Left cardiac atrium (tissue), 4 donors: ENCODE measurements at regions of chr11 and their contacts with region 1.

Region 1: DNA sequence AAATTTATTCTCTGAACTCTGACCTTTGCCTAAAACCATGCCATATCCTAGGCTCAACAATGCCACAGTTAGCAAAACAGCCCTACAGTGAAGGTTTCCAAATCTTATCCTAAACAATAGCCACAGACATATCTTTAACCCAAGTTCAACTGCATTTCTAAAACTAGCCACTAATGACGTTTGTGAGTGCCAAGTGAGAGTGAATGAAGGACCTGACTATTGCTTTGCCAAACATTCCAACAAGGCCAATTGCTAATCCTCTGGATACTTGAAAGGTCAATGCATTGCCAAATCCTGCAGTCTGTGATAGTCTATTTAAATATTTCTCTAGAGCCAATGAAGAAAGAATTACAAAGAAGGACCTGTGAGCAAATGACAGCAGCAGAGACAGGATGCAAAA is 2.5 kb upstream of the OR4C45 start:
- DNase-seq: no peak
- ATAC-seq: peak in 1 of 2 donors; percentile 59

Region 2: DNA sequence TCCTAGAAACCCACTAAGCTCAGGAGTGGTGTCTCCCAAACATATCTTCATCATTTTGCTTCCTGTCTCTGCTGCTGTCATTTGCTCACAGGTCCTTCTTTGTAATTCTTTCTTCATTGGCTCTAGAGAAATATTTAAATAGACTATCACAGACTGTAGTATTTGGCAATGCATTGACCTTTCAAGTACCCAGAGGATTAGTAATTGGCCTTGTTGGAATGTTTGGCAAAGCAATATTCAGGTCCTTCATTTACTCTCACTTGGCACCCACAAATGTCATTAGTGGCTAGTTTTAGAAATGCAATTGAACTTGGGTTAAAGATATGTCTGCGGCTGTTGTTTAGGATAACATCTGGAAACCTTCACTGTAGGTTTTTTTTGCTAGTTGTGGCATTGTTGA is 1675.5 kb before region 1 on chr11:
- intact Hi-C with region 1: loop called in 1 of 2 experiments (anchors 5 kb)
- DNase-seq: no peak
- ATAC-seq: peak in 1 of 2 donors; percentile 27

Region 3: DNA sequence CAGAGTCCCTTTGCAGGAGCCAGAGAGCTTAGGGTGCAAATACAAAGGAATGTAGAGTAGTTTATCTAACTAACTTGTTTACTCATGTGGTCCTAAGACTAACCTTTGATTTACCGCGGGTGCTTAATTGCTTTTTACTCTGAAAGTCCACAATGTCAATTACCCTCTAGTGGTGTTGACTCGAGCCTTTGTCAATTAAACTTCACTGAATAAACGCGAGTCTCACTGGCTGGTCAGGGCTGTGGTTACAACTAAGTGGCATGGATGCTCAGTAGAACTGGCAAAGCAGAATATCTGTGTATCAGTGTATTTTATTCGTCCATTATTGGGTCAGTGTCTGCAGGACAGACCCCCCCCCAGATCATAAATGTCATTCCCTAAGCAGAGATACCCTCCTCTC is 184.2 kb after region 1 on chr11:
- intact Hi-C with region 1: no loop called
- DNase-seq: no peak
- ATAC-seq: no peak